Dendritic cell treated with granulocyte-macrophage colony-stimulating factor and Interleukin-4, amounts not matched to agents 40 ng/mL and 50 ng/mL, for 4 days (primary cell): ENCODE measurements at regions of chr16 and their contacts with region 1.

Region 1: DNA sequence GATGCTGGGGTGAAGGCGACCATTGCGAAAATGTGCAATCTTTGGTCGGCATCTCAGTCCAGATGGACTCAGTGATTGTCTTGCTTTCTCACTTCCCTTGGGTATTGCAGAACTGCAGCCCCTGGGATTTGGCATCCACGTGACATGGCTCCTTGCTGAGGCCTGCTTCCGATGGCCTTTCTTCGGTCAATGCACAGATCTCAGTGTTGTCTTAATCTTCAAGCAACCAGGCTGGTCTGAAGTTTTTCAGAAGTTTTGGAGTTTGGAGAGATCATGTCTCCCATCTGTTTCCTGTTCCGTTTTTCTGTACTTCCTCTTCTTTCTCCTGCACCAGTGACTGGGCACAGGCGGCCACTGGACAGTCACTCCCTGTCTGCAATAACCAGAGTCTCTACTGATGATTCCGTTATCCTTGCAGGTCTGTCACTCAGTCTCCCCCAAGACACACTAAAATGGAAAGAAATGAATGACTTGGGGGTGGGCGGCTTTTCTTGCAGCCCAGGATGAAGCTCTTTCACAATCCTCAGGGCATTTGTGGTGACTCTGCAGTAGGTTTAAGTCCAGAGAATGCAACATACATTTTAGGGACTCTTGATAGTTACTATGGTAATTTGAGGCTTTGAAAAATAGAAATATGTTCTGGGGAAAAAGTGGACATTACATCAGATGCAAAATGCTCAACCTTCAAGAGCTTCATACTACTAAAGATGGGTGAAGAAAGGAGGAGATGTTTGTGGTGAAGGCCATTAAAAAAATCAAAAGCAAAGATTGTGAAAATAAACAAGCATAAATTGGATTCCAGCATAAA is 106.3 kb upstream of the ZFHX3 start:
- H3K4me3 Mint-ChIP-seq: peak overlapping the region; percentile 42
- H3K27ac Mint-ChIP-seq: peak overlapping the region; percentile 90
- H3K4me1 Mint-ChIP-seq: peaks cover 71% of the 10 kb centered on the region
- H3K27me3 Mint-ChIP-seq: no peaks in the 10 kb centered on the region

Region 2: GRCh38 chr16:72961121-72961763 is 193.0 kb before region 1 on chr16:
- intact Hi-C with region 1: no loop called
- H3K4me3 Mint-ChIP-seq: no peak overlapping the region
- H3K27ac Mint-ChIP-seq: no peak overlapping the region
- H3K4me1 Mint-ChIP-seq: peaks cover 5% of the 10 kb centered on the region
- H3K27me3 Mint-ChIP-seq: no peaks in the 10 kb centered on the region

Region 3: DNA sequence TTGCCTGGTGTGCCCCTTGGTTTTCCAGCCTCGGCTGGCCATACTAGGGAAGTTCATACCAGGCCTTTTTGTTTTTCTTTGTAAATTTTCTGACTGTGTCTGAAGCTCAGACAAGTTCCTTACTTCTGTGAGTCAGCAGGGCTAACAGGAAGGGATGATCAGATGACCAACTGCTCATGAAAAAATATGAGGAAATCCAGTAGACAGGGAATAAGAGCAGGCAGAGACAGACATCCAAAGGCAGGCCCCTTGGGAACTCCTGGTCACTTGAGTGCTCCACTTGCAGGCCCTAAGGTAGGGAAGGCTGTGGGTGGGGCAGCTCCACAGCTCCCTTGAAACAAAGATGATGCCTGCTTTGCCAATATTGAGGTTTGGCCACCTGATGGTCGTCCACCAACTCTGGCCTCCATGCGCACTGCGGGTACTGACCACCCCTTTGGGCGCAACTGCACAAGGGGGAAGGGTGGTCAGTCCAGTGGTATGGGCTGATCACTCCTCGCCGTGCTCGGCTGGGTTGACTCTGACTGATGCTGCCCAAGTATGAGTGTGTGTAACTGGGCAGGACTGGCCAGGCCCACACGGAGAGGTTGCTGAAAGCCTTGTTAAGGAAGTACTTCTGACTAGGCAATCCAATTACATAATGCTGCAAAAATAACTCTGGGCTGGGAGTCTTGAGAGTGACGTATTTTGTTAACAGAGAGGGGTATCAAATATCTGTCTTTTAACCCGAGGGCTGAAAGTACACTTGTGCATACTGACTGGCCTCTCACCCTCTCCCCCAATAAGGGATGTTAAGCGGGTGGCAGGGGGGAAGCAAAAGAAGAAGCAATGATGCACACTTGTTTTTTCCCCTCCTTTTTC is 85.5 kb before region 1 on chr16:
- intact Hi-C with region 1: loop called (anchors 5 kb)
- H3K4me3 Mint-ChIP-seq: peak overlapping the region; percentile 50
- H3K27ac Mint-ChIP-seq: peak overlapping the region; percentile 97
- H3K4me1 Mint-ChIP-seq: peaks cover 79% of the 10 kb centered on the region
- H3K27me3 Mint-ChIP-seq: peaks cover 43% of the 10 kb centered on the region

Region 4: GRCh38 chr16:73106326-73106725 is 47.9 kb before region 1 on chr16:
- intact Hi-C with region 1: no loop called
- H3K4me3 Mint-ChIP-seq: no peak overlapping the region
- H3K27ac Mint-ChIP-seq: no peak overlapping the region
- H3K4me1 Mint-ChIP-seq: peaks cover 6% of the 10 kb centered on the region
- H3K27me3 Mint-ChIP-seq: peaks cover 3% of the 10 kb centered on the region